Colonic mucosa (tissue), 4 donors: ENCODE measurements at regions of chr13 and their contacts with region 1.

Region 1: GRCh38 chr13:57624565-57625435 is 6.7 kb upstream of the PCDH17 start:
- DNase-seq: no peak
- H3K4me3 ChIP-seq: no peak overlapping the region
- H3K27ac ChIP-seq: no peak overlapping the region
- H3K4me1 ChIP-seq: no peaks in the 10 kb centered on the region
- H3K27me3 ChIP-seq: peaks cover 14% of the 10 kb centered on the region
- CTCF ChIP-seq: peak; percentile 82

Region 2: DNA sequence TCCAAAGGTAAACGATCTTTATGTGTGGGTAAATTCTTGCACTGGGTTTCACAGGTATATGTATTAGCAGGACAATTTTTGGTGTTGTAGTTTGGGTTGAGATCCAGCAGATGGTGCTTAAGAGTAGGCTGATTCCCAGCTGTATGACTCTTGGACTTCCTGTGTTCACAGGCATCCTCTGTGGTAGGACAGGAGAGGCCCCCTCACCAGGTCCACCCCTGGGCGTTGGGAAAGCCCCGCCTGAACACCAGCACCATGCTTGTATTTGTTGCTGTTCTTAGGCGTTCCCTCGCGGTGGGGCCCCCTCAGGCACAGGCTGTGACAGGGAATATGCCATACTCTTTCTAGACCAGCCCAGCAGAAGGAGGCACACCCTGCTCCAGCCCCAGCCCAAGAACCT is 42.8 kb before region 1 on chr13:
- intact Hi-C with region 1: no loop called
- DNase-seq: no peak
- H3K4me3 ChIP-seq: no peak overlapping the region
- H3K27ac ChIP-seq: no peak overlapping the region
- H3K4me1 ChIP-seq: no peaks in the 10 kb centered on the region
- H3K27me3 ChIP-seq: no peaks in the 10 kb centered on the region
- CTCF ChIP-seq: no peak

Region 3: DNA sequence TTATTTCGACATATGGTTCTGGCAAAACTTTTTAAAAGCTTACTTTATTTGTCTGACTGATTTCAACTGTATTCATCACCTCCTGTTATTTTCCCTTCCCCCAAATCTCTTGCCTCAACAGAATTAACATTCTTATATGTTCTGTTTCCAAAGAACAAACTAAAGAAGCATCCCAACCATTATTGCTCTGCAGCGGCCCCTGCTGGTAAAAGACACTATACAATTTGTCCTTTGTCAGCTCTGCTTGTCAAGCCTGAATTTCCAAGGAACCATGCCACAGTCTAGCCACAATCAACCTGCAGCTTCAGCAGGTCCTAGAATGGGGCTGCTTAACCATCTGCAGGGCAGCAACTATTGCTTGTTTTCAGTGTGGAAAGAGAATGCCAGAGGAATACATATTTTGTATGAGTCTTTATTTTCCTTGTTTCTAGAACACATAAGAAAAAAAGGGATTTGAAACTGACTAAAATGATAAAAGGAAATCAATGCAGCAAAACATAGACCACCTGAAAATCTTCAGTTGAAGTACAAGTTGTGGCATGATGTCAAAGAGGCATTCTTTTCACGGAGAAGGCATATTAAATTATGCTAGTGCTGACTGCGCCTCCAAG is 1693.6 kb after region 1 on chr13:
- intact Hi-C with region 1: loop called (anchors 10 kb)
- DNase-seq: peak; percentile 68
- H3K4me3 ChIP-seq: no peak overlapping the region
- H3K27ac ChIP-seq: no peak overlapping the region
- H3K4me1 ChIP-seq: no peaks in the 10 kb centered on the region
- H3K27me3 ChIP-seq: no peaks in the 10 kb centered on the region
- CTCF ChIP-seq: peak; percentile 64